ENCODE measurements at regions of chr11 and their contacts with region 1.

Region 1: DNA sequence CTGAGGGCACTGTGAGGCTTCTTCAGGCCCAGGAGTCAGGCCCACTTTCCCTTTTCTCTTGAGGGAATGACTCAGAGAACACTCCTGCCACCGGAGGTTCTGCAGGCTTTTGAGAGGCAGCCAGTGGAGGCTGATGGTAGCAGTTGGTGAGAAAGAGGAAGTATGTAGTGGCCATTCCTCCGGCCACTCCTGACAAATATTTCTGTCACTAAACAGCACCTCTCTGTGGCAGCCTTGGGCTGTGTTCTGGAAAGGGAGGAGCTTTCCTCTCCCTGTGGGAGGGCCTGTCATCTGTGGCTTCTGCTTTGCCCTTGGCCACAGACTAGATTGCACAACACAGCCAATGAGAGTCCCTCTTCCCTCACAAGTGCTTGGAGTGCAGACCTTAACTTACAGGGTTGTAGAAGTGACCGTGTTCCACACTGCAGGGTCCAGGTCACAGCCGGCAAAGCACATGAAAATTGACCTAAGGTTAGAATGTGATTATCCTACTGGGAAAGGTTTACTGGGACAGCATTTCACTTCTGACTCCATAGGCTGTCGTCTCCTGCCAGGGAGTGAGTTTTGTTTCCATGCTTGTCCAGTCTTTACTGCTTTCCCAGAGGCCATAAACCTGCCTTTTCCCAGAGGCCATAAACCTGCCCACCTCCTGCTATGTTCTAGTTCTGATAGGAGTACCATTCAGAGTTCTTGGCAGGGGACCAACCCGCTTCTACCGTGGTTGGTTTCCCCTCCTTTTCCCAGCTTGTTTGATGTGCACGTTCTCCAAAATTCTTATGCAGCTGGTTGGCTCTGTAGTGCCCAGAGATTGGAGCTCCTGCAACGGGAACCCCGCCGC is 33.3 kb downstream of the MARK2 start:
- DNase-seq: peak; percentile 85
- H3K4me3 Mint-ChIP-seq: peak overlapping the region; percentile 10
- H3K27ac Mint-ChIP-seq: peak overlapping the region; percentile 27
- H3K4me1 Mint-ChIP-seq: peaks cover 51% of the 10 kb centered on the region
- H3K27me3 Mint-ChIP-seq: no peaks in the 10 kb centered on the region

Region 2: DNA sequence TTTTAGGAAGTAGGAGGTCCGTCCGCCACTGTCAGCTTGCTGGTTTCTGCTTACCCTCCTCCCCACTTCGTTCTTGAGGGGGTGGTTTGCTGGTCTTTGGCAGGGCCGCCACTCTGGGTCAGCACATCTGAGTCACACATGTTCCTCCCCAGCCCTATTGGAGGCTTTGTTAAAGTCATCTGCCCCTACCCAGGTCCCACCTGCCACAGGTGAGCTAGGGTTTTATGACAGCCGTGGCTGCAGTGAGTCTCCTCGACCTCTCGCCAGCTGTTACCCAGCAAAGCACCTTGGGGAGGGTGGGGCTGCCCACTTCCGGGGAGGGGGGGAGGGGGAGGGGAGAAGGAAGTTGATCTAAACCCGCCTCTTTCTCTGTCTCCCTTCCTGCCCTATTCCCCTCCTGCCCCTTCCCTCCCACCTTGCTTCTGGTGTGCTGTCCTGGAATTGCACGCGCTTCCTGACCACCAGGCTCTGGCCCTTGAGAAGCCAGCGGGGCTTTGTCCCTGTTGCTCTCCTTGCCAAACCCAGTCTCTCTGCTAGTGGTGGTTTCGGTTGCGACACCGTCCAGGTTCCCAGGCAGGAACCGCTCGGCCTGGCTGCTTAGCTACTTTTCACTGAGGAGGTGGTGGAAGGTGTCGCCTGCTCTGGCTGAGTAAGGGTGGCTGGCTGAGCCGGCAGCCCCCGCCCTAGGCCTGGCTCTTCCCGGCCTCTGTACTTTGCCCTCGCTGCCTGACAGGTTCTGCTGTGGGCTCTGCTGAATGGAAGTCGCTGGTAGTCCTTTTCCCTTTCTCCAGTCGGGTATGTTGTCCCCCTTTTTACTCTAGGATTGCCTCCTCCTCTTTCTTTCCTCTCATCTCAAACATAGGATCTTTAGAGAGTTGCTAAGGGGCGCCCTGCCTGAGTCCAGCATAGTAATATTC is 16.2 kb after region 1 on chr11:
- intact Hi-C with region 1: loop called (anchors 2 kb)
- DNase-seq: peak; percentile 89
- H3K4me3 Mint-ChIP-seq: peak overlapping the region; percentile 91
- H3K27ac Mint-ChIP-seq: peak overlapping the region; percentile 94
- H3K4me1 Mint-ChIP-seq: peaks cover 69% of the 10 kb centered on the region
- H3K27me3 Mint-ChIP-seq: no peaks in the 10 kb centered on the region

Region 3: DNA sequence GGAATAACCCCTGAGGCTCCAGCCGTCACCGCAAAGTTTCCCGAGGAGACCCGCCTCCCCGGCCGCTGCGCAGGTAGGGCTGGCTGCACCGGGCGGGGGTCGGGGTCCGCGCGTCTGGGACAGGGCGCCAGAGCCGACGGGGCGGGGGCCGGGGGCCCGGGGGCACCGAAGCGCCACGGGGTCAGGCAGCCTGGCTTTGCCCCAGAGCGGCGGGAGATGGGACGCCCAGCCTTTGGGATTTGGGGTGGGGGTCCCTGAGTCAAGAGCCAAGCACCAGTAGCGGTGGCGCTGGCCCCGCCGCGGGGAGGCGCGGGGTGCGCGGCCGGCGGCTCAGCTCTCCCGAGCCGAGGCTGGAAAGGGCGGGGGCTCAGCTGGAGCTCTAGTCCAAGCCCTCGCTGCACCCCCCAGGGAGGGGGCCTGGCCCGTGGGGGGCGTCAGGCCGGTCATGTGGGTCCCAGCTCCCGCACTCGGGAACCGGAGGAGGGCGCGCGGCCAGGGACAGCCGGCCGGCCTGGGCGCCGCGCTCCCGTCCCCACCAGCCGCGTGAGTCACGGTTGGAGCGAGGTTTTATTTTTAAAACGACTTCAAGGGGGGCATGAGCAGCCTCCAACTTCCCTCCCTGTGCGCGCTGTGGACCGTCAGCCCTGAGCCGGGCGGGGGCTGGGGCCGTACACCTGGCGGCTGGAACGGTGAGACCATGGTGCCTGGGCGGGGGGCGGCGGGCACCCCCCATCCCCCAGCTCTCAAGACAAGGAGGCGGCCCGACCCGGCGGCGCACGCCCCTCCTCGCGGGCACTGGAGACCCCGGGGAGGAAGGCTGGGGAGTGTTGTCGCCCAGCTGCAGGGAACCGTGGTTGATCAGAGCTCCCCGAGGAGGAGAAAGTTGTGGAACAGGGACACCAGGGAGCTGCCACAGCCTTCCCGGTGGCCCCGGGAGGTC is 164.2 kb after region 1 on chr11:
- intact Hi-C with region 1: no loop called
- DNase-seq: no peak
- H3K4me3 Mint-ChIP-seq: no peak overlapping the region
- H3K27ac Mint-ChIP-seq: no peak overlapping the region
- H3K4me1 Mint-ChIP-seq: peaks cover 2% of the 10 kb centered on the region
- H3K27me3 Mint-ChIP-seq: peaks cover 31% of the 10 kb centered on the region